Calu3 (cell line): ENCODE measurements at regions of chr3 and their contacts with region 1.

Region 1: GRCh38 chr3:73707772-73708171 is 83.0 kb upstream of the PDZRN3 start:
- DNase-seq: no peak
- H3K4me3 Mint-ChIP-seq: no peak overlapping the region
- H3K27ac Mint-ChIP-seq: no peak overlapping the region
- H3K4me1 Mint-ChIP-seq: no peaks in the 10 kb centered on the region
- H3K27me3 Mint-ChIP-seq: no peaks in the 10 kb centered on the region
- CTCF ChIP-seq: no peak

Region 2: DNA sequence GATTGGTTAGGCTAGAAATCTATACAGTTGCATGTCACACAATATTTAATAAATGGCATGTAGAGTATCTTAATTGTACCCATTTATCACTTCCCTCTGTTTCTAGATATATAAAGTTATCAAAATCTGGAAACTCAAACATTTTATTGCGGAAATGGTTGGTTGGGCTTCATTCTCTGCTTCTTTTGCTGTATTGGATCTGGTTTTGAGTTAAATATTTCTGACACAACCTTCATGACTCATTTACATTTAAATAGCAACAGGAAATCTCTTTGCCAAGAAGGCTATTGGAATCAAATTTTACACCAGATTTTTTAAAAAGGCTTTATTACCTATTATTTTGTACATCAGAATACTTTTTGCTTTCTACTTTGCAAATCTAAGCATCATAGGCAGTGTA is 492.5 kb before region 1 on chr3:
- CTCF ChIA-PET with region 1: no interaction called
- intact Hi-C with region 1: no loop called
- DNase-seq: no peak
- H3K4me3 Mint-ChIP-seq: no peak overlapping the region
- H3K27ac Mint-ChIP-seq: no peak overlapping the region
- H3K4me1 Mint-ChIP-seq: no peaks in the 10 kb centered on the region
- H3K27me3 Mint-ChIP-seq: peaks cover 14% of the 10 kb centered on the region
- CTCF ChIP-seq: no peak

Region 3: GRCh38 chr3:73511571-73512525 is 195.9 kb before region 1 on chr3:
- CTCF ChIA-PET with region 1: no interaction called
- intact Hi-C with region 1: loop called (anchors 5 kb)
- DNase-seq: no peak
- H3K4me3 Mint-ChIP-seq: no peak overlapping the region
- H3K27ac Mint-ChIP-seq: no peak overlapping the region
- H3K4me1 Mint-ChIP-seq: no peaks in the 10 kb centered on the region
- H3K27me3 Mint-ChIP-seq: peaks cover 11% of the 10 kb centered on the region
- CTCF ChIP-seq: no peak